Heart right ventricle (tissue), 16 donors: ENCODE measurements at regions of chr4 and their contacts with region 1.

Region 1: DNA sequence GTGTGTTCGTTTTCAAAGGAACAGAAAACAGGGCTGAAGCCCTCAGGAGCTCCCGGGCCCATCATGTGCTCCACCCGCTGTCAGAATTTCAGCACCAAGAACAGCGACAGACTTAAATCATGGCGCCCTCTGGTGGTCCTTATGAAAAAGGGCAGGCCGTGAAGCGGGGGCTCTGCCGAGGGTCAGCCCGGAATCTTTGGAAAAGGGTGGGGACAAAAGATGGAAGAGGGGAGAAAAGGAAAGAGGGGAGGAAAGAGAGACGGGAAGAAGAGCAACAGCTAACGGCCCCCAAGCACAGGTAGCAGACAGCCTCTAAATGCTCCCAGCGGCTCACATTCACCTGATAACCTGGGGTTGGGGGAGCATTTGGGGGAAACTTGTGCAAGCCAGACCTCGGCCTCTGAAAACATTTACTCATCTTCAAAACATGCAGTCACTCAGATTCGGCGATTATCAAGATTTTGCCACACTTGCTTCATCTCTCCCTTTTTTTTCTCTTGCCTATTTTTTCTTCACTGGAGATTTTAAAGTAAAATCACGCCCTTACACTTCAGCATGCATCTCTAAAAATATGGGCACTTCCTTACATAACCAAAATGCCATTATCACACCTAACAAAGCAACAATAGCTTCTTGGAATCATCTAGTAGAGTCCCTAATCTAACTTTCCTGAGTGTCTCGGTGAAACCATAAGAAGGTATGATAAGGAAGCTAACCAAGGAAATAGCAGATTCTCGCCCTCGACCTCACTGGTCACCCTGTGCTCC is 28.1 kb upstream of the MAN2B2 start:
- DNase-seq: peak in 1 of 2 donors; percentile 36
- ATAC-seq: peak in 6 of 8 donors; percentile 19 to 56 (median 45)
- H3K4me3 ChIP-seq: no peak overlapping the region
- H3K27ac ChIP-seq: no peak overlapping the region
- H3K4me1 ChIP-seq: peaks cover 0 to 11% (median 0%) of the 10 kb centered on the region in 9 donors
- H3K27me3 ChIP-seq: peaks cover 0 to 13% (median 2%) of the 10 kb centered on the region in 7 donors
- CTCF ChIP-seq: peak; percentile 52 to 95 (median 84)

Region 2: GRCh38 chr4:6250235-6250983 is 296.5 kb before region 1 on chr4:
- intact Hi-C with region 1: loop called in 4 of 10 experiments (anchors 5 to 10 kb)
- DNase-seq: peak in 1 of 2 donors; percentile 38
- ATAC-seq: peak in 6 of 8 donors; percentile 28 to 65 (median 43)
- H3K4me3 ChIP-seq: no peak overlapping the region
- H3K27ac ChIP-seq: no peak overlapping the region
- H3K4me1 ChIP-seq: peaks cover 0 to 7% (median 2%) of the 10 kb centered on the region in 9 donors
- H3K27me3 ChIP-seq: peaks cover 0 to 49% (median 41%) of the 10 kb centered on the region in 7 donors
- CTCF ChIP-seq: peak; percentile 73 to 87 (median 83)

Region 3: DNA sequence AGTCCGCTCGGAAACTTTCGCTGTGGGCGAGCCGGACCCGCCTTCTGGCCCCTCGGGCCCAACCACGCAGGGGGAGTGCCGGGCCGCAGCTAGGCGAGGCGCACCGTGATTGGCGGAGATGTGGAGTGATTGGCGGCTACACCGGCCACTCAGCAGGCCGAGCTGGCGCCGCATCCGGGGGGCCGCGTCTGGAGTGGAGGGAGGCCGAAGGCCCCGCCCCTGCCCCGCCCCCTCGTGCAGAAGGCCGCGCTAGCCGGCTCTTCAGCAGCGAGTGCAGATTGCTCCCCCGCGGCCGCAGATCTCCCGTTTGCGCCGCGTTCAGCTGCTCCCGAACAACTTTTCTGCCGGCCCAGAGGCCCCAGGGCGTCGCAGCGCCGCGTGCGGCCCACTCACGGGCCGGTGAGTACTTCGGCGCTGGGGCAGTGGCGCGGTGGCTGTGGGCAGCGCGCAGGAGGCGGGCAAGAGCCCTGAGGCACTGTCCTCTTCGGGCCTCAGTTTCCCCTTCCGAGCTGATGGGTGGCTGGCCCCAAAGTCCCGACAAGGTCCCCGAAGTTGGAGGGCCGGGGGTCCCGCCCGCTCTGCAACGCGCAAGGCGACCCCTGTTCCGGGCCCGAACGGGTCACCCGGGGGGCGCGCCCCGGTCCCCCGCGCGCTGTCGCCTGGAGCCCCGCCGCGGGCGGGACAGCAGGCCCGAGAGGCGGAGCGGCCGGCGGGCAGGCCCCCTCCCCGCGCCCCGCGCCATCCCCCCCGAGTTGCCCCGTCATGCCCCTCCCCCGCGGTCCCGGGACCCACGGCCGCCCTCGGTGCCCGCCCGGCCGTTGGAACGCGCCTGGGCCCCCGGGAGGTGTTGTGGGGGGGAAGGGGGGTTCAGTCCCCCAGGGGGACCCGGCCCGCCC is 277.0 kb before region 1 on chr4 and contains the start of gene WFS1:
- intact Hi-C with region 1: loop called in 1 of 10 experiments (anchors 10 kb)
- DNase-seq: peak; percentile 98 to 99
- ATAC-seq: peak; percentile 98 to 99 (median 99)
- H3K4me3 ChIP-seq: peak within 1 kb of the TSS; percentile 86 to 100 (median 94)
- H3K27ac ChIP-seq: peak within 1 kb of the TSS; percentile 37 to 92 (median 84)
- H3K4me1 ChIP-seq: peaks cover 27 to 52% (median 47%) of the 10 kb centered on the region in 9 donors
- H3K27me3 ChIP-seq: peaks cover 0 to 26% (median 0%) of the 10 kb centered on the region in 7 donors
- CTCF ChIP-seq: peak in 1 of 9 donors; percentile 11
- total RNA-seq, gene WFS1: 53.3 to 119 (median 78.3) TPM

Region 4: GRCh38 chr4:6500481-6501140 is 46.3 kb before region 1 on chr4:
- intact Hi-C with region 1: no loop called
- DNase-seq: no peak
- ATAC-seq: no peak
- H3K4me3 ChIP-seq: no peak overlapping the region
- H3K27ac ChIP-seq: no peak overlapping the region
- H3K4me1 ChIP-seq: no peaks in the 10 kb centered on the region
- H3K27me3 ChIP-seq: peaks cover 0 to 12% (median 0%) of the 10 kb centered on the region in 7 donors
- CTCF ChIP-seq: no peak

Region 5: GRCh38 chr4:7156761-7157488 is 610.1 kb after region 1 on chr4:
- intact Hi-C with region 1: no loop called
- DNase-seq: peak in 1 of 2 donors; percentile 49
- ATAC-seq: peak; percentile 51 to 77 (median 54)
- H3K4me3 ChIP-seq: no peak overlapping the region
- H3K27ac ChIP-seq: peak overlapping the region in 5 of 10 donors; percentile 0 to 85 (median 72)
- H3K4me1 ChIP-seq: peaks cover 5 to 30% (median 17%) of the 10 kb centered on the region in 9 donors
- H3K27me3 ChIP-seq: no peaks in the 10 kb centered on the region
- CTCF ChIP-seq: peak; percentile 23 to 75 (median 64)